Caco-2 (cell line): ENCODE measurements at regions of chr6 and their contacts with region 1.

Region 1: DNA sequence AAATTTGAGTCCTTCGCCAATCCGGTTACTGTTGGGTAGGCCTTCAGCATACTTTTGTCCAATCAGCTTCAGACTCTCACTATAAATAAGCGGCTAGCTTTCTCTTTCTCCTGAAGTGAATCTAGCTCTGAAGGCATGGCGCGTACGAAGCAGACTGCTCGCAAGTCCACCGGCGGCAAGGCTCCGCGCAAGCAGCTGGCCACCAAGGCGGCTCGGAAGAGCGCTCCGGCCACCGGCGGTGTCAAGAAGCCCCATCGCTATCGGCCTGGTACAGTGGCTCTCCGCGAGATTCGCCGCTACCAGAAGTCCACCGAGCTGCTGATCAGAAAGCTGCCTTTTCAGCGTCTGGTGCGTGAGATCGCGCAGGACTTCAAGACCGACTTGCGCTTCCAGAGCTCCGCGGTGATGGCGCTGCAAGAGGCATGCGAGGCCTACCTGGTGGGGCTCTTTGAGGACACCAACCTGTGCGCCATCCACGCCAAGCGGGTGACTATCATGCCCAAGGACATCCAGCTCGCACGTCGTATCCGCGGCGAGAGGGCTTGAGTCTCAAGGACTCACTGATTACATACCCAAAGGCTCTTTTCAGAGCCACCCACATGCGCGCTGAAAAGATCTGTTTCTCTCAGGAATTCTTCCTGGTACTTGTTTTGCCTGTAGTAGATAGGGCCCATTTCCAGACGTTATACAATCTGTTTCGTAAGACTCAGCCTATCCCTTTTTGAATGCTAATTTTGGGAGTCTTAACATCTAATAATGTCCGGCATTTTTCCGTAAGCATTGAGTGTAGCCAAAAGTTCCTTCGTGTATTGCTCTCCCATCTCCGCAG is 102.0 kb downstream of the OR2B2 start:
- DNase-seq: peak; percentile 87 to 91
- H3K4me3 ChIP-seq: peak overlapping the region; percentile 78
- H3K4me3 Mint-ChIP-seq: peak overlapping the region; percentile 87
- H3K27ac Mint-ChIP-seq: peak overlapping the region; percentile 97
- H3K4me1 ChIP-seq: peaks cover 28% of the 10 kb centered on the region
- H3K4me1 Mint-ChIP-seq: peaks cover 32% of the 10 kb centered on the region
- H3K27me3 ChIP-seq: no peaks in the 10 kb centered on the region
- H3K27me3 Mint-ChIP-seq: no peaks in the 10 kb centered on the region
- CTCF ChIP-seq: no peak

Region 2: GRCh38 chr6:27132532-27133280 is 677.4 kb before region 1 on chr6:
- CTCF ChIA-PET with region 1: no interaction called
- POLR2A ChIA-PET with region 1: interaction called, 21 read pairs
- intact Hi-C with region 1: loop called (anchors 1 kb)
- DNase-seq: peak; percentile 95 to 96
- H3K4me3 ChIP-seq: peak overlapping the region; percentile 70
- H3K4me3 Mint-ChIP-seq: no peak overlapping the region
- H3K27ac Mint-ChIP-seq: no peak overlapping the region
- H3K4me1 ChIP-seq: peaks cover 25% of the 10 kb centered on the region
- H3K4me1 Mint-ChIP-seq: peaks cover 6% of the 10 kb centered on the region
- H3K27me3 ChIP-seq: no peaks in the 10 kb centered on the region
- H3K27me3 Mint-ChIP-seq: no peaks in the 10 kb centered on the region
- CTCF ChIP-seq: no peak

Region 3: GRCh38 chr6:27761391-27761790 is 48.8 kb before region 1 on chr6:
- CTCF ChIA-PET with region 1: no interaction called
- POLR2A ChIA-PET with region 1: no interaction called
- intact Hi-C with region 1: no loop called
- DNase-seq: no peak
- H3K4me3 ChIP-seq: no peak overlapping the region
- H3K4me3 Mint-ChIP-seq: no peak overlapping the region
- H3K27ac Mint-ChIP-seq: no peak overlapping the region
- H3K4me1 ChIP-seq: no peaks in the 10 kb centered on the region
- H3K4me1 Mint-ChIP-seq: no peaks in the 10 kb centered on the region
- H3K27me3 ChIP-seq: no peaks in the 10 kb centered on the region
- H3K27me3 Mint-ChIP-seq: no peaks in the 10 kb centered on the region
- CTCF ChIP-seq: no peak

Region 4: GRCh38 chr6:27795697-27796494 is 14.3 kb before region 1 on chr6:
- CTCF ChIA-PET with region 1: interaction called, 17 read pairs
- POLR2A ChIA-PET with region 1: interaction called, 9 read pairs
- intact Hi-C with region 1: no loop called
- DNase-seq: peak; percentile 56 to 88
- H3K4me3 ChIP-seq: no peak overlapping the region
- H3K4me3 Mint-ChIP-seq: peak overlapping the region; percentile 52
- H3K27ac Mint-ChIP-seq: peak overlapping the region; percentile 77
- H3K4me1 ChIP-seq: peaks cover 22% of the 10 kb centered on the region
- H3K4me1 Mint-ChIP-seq: peaks cover 16% of the 10 kb centered on the region
- H3K27me3 ChIP-seq: no peaks in the 10 kb centered on the region
- H3K27me3 Mint-ChIP-seq: peaks cover 3% of the 10 kb centered on the region
- CTCF ChIP-seq: peak; percentile 60 to 79

Region 5: DNA sequence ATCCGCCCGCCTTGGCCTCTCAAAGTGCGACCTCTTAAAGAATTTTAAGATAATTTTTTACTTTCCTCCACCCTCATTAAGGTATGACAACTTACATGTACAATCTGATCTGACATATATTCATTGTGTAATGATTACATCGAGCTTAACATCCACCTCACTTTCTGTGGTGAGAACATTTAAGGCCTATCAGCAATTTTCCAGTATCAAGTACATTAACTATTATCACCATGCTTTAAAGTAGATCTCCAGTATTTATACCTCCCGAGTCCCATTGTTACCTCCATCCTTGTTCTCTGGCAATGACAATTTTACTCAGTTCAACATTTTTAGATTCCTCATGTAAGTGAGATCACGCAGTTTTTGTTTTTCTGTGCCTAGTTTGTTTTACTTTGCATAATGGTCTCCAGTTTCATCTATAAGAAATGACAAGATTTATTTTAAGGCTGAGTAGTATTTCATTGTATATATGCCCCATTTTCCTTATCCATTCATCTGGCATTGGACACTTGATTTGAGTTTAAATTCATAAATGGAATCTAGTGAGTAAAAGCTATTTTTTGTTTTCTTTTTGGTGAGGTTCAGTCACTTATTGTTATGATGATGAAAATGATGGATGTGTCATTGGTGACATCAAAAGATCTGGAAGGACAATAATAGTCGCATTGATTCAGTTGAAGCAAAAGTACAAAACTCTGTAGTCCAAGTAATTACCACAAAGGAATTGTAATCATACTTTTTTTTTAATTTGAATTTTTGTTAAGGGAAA is 15.1 kb after region 1 on chr6:
- CTCF ChIA-PET with region 1: no interaction called
- POLR2A ChIA-PET with region 1: interaction called, 24 read pairs
- intact Hi-C with region 1: no loop called
- DNase-seq: no peak
- H3K4me3 ChIP-seq: peak overlapping the region; percentile 78
- H3K4me3 Mint-ChIP-seq: peak overlapping the region; percentile 89
- H3K27ac Mint-ChIP-seq: peak overlapping the region; percentile 97
- H3K4me1 ChIP-seq: peaks cover 11% of the 10 kb centered on the region; the same call in 1 of the 2 replicates
- H3K4me1 Mint-ChIP-seq: peaks cover 21% of the 10 kb centered on the region
- H3K27me3 ChIP-seq: no peaks in the 10 kb centered on the region
- H3K27me3 Mint-ChIP-seq: peaks cover 4% of the 10 kb centered on the region
- CTCF ChIP-seq: no peak

Region 6: GRCh38 chr6:27838058-27838944 is 28.1 kb after region 1 on chr6:
- CTCF ChIA-PET with region 1: no interaction called
- POLR2A ChIA-PET with region 1: interaction called, 74 read pairs
- intact Hi-C with region 1: no loop called
- DNase-seq: peak; percentile 91 to 92
- H3K4me3 ChIP-seq: peak overlapping the region; percentile 77
- H3K4me3 Mint-ChIP-seq: no peak overlapping the region
- H3K27ac Mint-ChIP-seq: no peak overlapping the region
- H3K4me1 ChIP-seq: peaks cover 14% of the 10 kb centered on the region; the same call in 1 of the 2 replicates
- H3K4me1 Mint-ChIP-seq: peaks cover 21% of the 10 kb centered on the region
- H3K27me3 ChIP-seq: no peaks in the 10 kb centered on the region
- H3K27me3 Mint-ChIP-seq: no peaks in the 10 kb centered on the region
- CTCF ChIP-seq: no peak

Region 7: DNA sequence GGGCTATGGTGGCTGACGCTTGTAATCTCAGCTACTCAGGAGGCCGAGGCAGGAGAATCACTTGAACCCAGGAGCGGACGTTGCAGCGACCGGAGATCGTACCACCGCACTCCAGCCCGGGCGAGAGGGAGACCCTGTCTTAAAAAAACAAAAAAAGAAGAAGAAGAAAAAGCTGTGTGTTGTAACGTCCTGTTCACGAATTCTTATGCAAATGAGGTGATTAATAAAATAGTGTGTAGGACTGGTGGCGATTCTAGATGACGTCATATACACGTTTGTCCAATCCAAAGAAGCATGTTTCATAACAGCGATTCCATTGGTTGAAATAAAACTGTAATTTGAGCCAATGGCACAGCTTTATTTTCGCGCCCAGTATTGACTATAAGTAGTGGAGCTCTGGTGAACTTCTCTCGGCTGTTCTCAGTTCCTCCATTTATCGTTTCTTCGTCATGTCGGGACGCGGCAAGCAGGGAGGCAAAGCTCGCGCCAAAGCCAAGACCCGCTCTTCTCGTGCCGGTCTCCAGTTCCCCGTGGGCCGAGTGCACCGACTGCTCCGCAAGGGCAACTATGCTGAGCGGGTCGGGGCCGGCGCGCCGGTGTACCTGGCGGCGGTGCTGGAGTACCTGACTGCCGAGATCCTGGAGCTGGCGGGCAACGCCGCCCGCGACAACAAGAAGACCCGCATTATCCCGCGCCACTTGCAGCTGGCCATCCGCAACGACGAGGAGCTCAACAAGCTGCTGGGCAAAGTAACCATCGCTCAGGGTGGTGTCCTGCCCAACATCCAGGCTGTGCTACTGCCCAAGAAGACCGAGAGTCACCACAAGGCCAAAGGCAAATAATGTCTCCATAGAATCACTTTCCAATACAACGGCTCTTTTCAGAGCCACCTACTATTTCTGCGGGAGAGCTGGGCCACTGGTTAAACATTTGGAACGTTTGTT is 55.0 kb after region 1 on chr6:
- CTCF ChIA-PET with region 1: no interaction called
- POLR2A ChIA-PET with region 1: interaction called, 53 read pairs
- intact Hi-C with region 1: no loop called
- DNase-seq: peak; percentile 85 to 89
- H3K4me3 ChIP-seq: peak overlapping the region; percentile 49
- H3K4me3 Mint-ChIP-seq: peak overlapping the region; percentile 76
- H3K27ac Mint-ChIP-seq: peak overlapping the region; percentile 99
- H3K4me1 ChIP-seq: 0 out of 2 replicates have a peak, but pooled peaks cover 4% of the 10 kb centered on the region
- H3K4me1 Mint-ChIP-seq: peaks cover 12% of the 10 kb centered on the region
- H3K27me3 ChIP-seq: no peaks in the 10 kb centered on the region
- H3K27me3 Mint-ChIP-seq: peaks cover 9% of the 10 kb centered on the region
- CTCF ChIP-seq: no peak

Region 8: DNA sequence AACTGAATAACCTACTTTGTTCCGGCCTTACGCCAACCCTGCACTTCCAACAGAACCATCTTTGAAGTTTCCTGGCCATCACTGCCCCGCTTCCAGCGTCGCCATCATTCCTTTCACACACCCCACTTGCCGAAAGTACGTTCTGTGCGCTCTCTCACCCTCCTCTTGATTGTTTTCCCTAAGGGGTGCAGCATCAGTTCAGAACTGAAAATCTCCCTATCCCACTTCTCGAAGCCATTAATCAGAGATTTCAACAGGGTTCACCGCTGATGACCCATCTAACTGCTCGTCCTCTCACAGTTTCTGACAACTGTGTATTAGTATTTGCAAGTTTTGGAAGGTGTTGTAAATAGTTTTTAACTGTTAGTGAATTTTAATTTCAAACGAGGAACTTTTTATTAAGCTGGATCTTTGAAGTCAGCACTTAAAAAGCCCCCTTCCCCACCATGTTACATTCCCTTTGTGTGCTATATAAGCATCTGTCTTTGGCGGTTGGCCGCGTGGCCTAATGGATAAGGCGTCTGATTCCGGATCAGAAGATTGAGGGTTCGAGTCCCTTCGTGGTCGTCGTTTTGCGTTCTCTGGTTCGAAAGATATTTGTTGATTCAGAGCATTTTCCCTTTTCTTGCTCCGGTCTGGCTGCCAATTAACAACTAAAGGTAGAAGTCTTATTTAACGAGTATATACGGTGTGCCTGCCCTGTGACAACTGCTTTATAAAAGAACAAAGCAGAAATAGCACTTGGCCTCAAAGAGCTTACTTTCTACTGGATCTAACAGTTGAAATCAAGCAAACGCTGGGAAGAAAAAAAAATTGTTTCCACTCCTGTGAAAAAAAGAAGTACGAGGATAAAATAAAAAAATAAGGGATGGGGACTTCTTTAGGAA is 1071.0 kb after region 1 on chr6:
- CTCF ChIA-PET with region 1: no interaction called
- POLR2A ChIA-PET with region 1: interaction called, 11 read pairs
- intact Hi-C with region 1: no loop called
- DNase-seq: peak; percentile 62 to 72
- H3K4me3 ChIP-seq: no peak overlapping the region
- H3K4me3 Mint-ChIP-seq: peak overlapping the region; percentile 81
- H3K27ac Mint-ChIP-seq: peak overlapping the region; percentile 96
- H3K4me1 ChIP-seq: peaks cover 14% of the 10 kb centered on the region
- H3K4me1 Mint-ChIP-seq: peaks cover 18% of the 10 kb centered on the region
- H3K27me3 ChIP-seq: no peaks in the 10 kb centered on the region
- H3K27me3 Mint-ChIP-seq: no peaks in the 10 kb centered on the region
- CTCF ChIP-seq: no peak